ENCODE measurements at regions of chr3 and their contacts with region 1.

Region 1: DNA sequence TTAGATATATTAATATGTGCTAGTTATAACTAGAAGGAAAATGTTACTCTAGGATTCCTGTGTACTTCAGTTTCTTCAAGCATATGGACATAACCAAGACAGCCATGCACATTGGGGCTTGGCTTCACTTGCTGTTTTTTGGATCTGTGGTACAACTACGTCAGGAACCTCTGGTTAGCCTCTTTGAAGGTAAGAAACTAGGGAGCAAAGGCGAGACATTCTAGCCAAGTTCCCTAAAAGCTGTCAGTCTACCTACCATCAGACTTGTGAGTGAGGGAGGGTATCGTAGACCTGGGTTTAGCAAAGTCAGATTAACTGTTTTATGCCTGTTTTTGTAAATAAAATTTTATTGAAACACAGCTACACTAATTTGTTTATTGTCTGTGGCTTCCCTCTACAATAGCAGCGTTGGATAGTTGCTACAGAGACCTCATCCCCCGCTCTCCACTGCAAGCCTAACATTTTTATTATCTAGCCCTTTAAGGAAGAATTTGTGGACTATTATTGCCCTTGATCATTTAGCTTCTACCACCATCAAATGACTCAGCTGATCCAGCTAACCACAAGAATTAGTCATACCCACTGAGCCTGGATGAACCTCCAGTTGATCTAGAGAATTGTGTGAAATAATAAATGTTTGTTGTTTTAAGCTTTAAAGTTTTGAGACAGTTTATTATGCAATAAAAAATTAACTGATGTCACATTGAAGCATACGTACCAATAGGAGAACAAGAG is 58.0 kb downstream of the RSRC1 start:
- DNase-seq: peak; percentile 38
- H3K4me3 Mint-ChIP-seq: no peak overlapping the region
- H3K27ac Mint-ChIP-seq: no peak overlapping the region
- H3K4me1 Mint-ChIP-seq: peaks cover 4% of the 10 kb centered on the region
- H3K27me3 Mint-ChIP-seq: no peaks in the 10 kb centered on the region

Region 2: DNA sequence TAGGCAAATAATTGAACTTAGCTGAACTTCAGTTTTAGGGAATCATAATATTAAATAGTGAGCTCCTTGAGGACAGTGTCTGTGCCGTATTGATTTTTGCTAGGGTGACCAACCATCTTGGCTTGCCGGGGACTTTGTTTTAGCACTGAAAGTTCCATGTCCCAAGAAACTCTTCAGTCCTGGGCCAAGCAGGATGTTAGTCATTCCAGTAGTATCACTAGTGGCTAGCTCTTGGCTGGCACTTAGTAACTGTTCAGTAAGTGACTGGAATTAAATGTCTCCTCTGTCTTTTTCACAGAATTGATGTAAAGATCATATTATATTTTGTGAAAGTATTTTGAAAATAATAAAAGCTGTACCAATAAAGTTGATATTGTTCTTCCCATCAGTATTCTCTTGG is 15.7 kb before region 1 on chr3:
- CTCF ChIA-PET with region 1: interaction called, 3 read pairs
- intact Hi-C with region 1: loop called (anchors 2 kb)
- DNase-seq: peak; percentile 4
- H3K4me3 Mint-ChIP-seq: no peak overlapping the region
- H3K27ac Mint-ChIP-seq: no peak overlapping the region
- H3K4me1 Mint-ChIP-seq: peaks cover 10% of the 10 kb centered on the region
- H3K27me3 Mint-ChIP-seq: no peaks in the 10 kb centered on the region

Measured in activated naive CD4-positive, alpha-beta T cell treated with anti-CD3 and anti-CD28 coated beads for 36 hours (primary cell).